Naive thymus-derived CD4-positive, alpha-beta T cell (primary cell): ENCODE measurements at regions of chr2 and their contacts with region 1.

Region 1: DNA sequence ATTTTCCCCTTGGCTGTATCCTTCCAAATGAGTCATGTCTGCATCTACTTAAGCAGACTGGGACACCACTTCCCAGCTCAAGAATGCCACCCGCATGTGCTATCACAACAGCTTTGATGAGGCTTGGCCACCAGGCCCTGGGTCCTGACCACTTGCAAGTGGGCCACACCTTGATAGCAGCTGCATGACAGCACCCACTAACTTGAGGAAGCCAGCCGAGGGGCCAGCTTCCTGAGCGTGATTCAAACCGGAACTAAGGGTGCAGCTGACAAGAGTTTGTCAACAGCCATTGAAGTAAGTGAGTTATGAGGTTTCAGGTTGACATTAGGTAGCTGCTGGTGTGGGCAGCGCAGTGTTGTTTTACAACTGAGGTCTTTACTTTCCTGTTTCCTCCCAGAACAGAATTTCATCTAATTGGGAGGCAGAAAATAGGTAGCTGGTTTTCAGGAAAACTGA is 54.4 kb downstream of the EPHA4 start:
- DNase-seq: peak; percentile 25 to 86 (median 74)
- ATAC-seq: peak; percentile 79
- H3K4me3 ChIP-seq: peak overlapping the region; percentile 43
- H3K4me3 Mint-ChIP-seq: no peak overlapping the region
- H3K27ac ChIP-seq: peak overlapping the region; percentile 66
- H3K27ac Mint-ChIP-seq: no peak overlapping the region
- H3K4me1 ChIP-seq: peaks cover 46 to 53% of the 10 kb centered on the region in 2 donors
- H3K4me1 Mint-ChIP-seq: peaks cover 0 to 31% (median 10%) of the 10 kb centered on the region in 7 donors
- H3K27me3 ChIP-seq: no peaks in the 10 kb centered on the region
- H3K27me3 Mint-ChIP-seq: peaks cover 0 to 6% (median 0%) of the 10 kb centered on the region in 5 donors

Region 2: GRCh38 chr2:221423210-221423786 is 94.4 kb before region 1 on chr2:
- CTCF ChIA-PET with region 1: no interaction called
- POLR2A ChIA-PET with region 1: interaction called, 10 read pairs
- intact Hi-C with region 1: loop called in 1 of 2 experiments (anchors 10 kb)
- DNase-seq: no peak
- ATAC-seq: no peak
- H3K4me3 ChIP-seq: no peak overlapping the region
- H3K4me3 Mint-ChIP-seq: no peak overlapping the region
- H3K27ac ChIP-seq: no peak overlapping the region
- H3K27ac Mint-ChIP-seq: peak overlapping the region in 1 of 9 donors; percentile 52
- H3K4me1 ChIP-seq: peaks cover 4 to 13% of the 10 kb centered on the region in 2 donors
- H3K4me1 Mint-ChIP-seq: peaks cover 2 to 28% (median 17%) of the 10 kb centered on the region in 7 donors
- H3K27me3 ChIP-seq: no peaks in the 10 kb centered on the region
- H3K27me3 Mint-ChIP-seq: no peaks in the 10 kb centered on the region

Region 3: DNA sequence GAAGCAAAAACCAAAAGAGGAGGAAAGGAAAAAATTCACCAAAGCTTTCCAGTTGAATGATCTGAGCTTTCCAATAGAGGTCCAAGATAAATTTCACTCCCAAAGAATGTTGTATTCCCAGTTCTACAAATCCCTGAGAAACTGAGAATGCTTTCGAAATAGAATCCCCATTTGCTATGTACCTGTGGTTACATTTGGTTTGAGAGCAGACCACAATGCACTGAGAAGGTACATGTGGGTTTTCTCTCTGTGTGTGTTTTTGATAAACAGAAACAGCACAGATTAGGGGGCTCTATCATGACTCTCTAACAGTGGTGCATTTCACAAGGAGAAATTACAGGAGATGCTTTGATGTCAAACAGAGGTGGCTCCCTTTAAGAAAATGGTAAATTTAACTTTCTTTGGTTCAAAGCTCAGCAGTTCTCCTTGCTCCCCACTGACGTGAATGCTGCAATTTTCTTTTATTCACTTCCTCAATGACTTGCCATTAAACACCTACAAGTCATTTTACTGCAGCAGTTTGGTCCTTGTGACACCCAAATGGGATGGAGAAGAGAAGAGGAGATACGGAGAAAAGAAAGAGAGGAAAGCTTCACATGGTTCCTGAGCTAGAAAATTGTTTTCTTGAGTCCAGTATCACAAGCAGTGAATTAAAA is 54.4 kb before region 1 on chr2:
- CTCF ChIA-PET with region 1: no interaction called
- POLR2A ChIA-PET with region 1: interaction called, 4 read pairs
- intact Hi-C with region 1: loop called in 1 of 2 experiments (anchors 1 kb)
- DNase-seq: no peak
- ATAC-seq: no peak
- H3K4me3 ChIP-seq: no peak overlapping the region
- H3K4me3 Mint-ChIP-seq: peak overlapping the region in 4 of 10 donors; percentile 4 to 34 (median 27)
- H3K27ac ChIP-seq: no peak overlapping the region
- H3K27ac Mint-ChIP-seq: peak overlapping the region in 2 of 9 donors; percentile 14 to 26
- H3K4me1 ChIP-seq: peaks cover 15 to 23% of the 10 kb centered on the region in 2 donors
- H3K4me1 Mint-ChIP-seq: peaks cover 16 to 49% (median 39%) of the 10 kb centered on the region in 7 donors
- H3K27me3 ChIP-seq: no peaks in the 10 kb centered on the region
- H3K27me3 Mint-ChIP-seq: peaks cover 0 to 45% (median 0%) of the 10 kb centered on the region in 5 donors

Region 4: GRCh38 chr2:221529943-221530652 is 12.4 kb after region 1 on chr2:
- CTCF ChIA-PET with region 1: interaction called, 3 read pairs
- POLR2A ChIA-PET with region 1: interaction called, 47 read pairs
- intact Hi-C with region 1: loop called (anchors 1 kb)
- DNase-seq: peak in 1 of 9 donors; percentile 37
- ATAC-seq: peak; percentile 56
- H3K4me3 ChIP-seq: no peak overlapping the region
- H3K4me3 Mint-ChIP-seq: peak overlapping the region; percentile 45 to 84 (median 62)
- H3K27ac ChIP-seq: no peak overlapping the region
- H3K27ac Mint-ChIP-seq: peak overlapping the region; percentile 57 to 95 (median 84)
- H3K4me1 ChIP-seq: peaks cover 37 to 38% of the 10 kb centered on the region in 2 donors
- H3K4me1 Mint-ChIP-seq: peaks cover 20 to 54% (median 48%) of the 10 kb centered on the region in 7 donors
- H3K27me3 ChIP-seq: no peaks in the 10 kb centered on the region
- H3K27me3 Mint-ChIP-seq: peaks cover 0 to 8% (median 0%) of the 10 kb centered on the region in 5 donors

Region 5: GRCh38 chr2:221549143-221549542 is 31.4 kb after region 1 on chr2:
- CTCF ChIA-PET with region 1: no interaction called
- POLR2A ChIA-PET with region 1: no interaction called
- intact Hi-C with region 1: loop called in 1 of 2 experiments (anchors 2 kb)
- DNase-seq: no peak
- ATAC-seq: no peak
- H3K4me3 ChIP-seq: no peak overlapping the region
- H3K4me3 Mint-ChIP-seq: peak overlapping the region in 1 of 10 donors; percentile 62
- H3K27ac ChIP-seq: no peak overlapping the region
- H3K27ac Mint-ChIP-seq: peak overlapping the region in 2 of 9 donors; percentile 17 to 78
- H3K4me1 ChIP-seq: peaks cover 0 to 7% of the 10 kb centered on the region in 2 donors
- H3K4me1 Mint-ChIP-seq: peaks cover 0 to 28% (median 17%) of the 10 kb centered on the region in 7 donors
- H3K27me3 ChIP-seq: no peaks in the 10 kb centered on the region
- H3K27me3 Mint-ChIP-seq: peaks cover 0 to 11% (median 0%) of the 10 kb centered on the region in 5 donors

Region 6: GRCh38 chr2:221911316-221911715 is 393.6 kb after region 1 on chr2:
- CTCF ChIA-PET with region 1: no interaction called
- POLR2A ChIA-PET with region 1: no interaction called
- intact Hi-C with region 1: no loop called
- DNase-seq: no peak
- ATAC-seq: no peak
- H3K4me3 ChIP-seq: no peak overlapping the region
- H3K4me3 Mint-ChIP-seq: no peak overlapping the region
- H3K27ac ChIP-seq: no peak overlapping the region
- H3K27ac Mint-ChIP-seq: no peak overlapping the region
- H3K4me1 ChIP-seq: no peaks in the 10 kb centered on the region
- H3K4me1 Mint-ChIP-seq: no peaks in the 10 kb centered on the region
- H3K27me3 ChIP-seq: no peaks in the 10 kb centered on the region
- H3K27me3 Mint-ChIP-seq: no peaks in the 10 kb centered on the region

Region 7: DNA sequence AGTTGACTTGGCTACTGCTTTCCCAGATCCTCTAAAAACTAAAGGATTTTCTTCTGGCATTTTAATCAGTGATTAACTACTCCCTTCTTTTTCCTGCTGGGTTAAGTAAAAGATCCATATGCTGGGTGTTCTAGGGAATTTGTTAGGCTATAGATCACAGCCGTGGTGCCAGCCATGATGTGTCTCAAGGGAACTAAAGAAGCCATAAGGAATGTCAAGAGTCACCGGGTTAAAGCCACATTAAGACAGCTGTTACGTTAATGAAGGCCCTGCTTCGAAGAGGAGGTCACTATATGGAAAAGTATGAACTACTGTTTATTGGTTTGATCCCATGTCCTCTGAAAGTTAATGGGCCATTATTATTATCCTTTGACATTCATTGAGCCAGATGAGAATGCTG is 710.3 kb after region 1 on chr2:
- CTCF ChIA-PET with region 1: no interaction called
- POLR2A ChIA-PET with region 1: no interaction called
- intact Hi-C with region 1: no loop called
- DNase-seq: no peak
- ATAC-seq: no peak
- H3K4me3 ChIP-seq: no peak overlapping the region
- H3K4me3 Mint-ChIP-seq: no peak overlapping the region
- H3K27ac ChIP-seq: no peak overlapping the region
- H3K27ac Mint-ChIP-seq: no peak overlapping the region
- H3K4me1 ChIP-seq: no peaks in the 10 kb centered on the region
- H3K4me1 Mint-ChIP-seq: no peaks in the 10 kb centered on the region
- H3K27me3 ChIP-seq: no peaks in the 10 kb centered on the region
- H3K27me3 Mint-ChIP-seq: peaks cover 0 to 10% (median 5%) of the 10 kb centered on the region in 5 donors